ENCODE measurements at regions of chr7 and their contacts with region 1.

Region 1: GRCh38 chr7:134660961-134661376 is 14.3 kb downstream of the BPGM start:
- DNase-seq: peak; percentile 74
- H3K4me3 ChIP-seq: no peak overlapping the region
- CTCF ChIP-seq: no peak

Region 2: DNA sequence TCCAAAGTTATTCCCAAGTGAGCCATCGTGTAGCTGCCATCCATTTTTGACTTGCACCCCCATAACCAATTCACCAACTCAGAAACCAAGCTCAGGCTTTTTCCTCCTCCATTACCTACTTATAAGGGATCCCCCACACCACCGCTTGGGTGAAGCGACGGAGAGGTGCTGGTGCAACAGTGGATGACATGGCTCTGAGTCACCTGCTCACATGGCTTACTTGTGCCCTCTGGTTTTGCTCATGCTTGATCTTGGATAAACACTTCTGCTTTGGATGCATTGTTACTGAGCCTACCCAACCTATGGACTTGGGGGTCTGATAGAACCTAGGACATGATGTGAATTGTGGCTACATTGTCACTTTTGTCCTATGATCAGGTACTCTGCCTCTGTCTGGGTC is 190.1 kb before region 1 on chr7:
- CTCF ChIA-PET with region 1: no interaction called
- POLR2A ChIA-PET with region 1: no interaction called
- DNase-seq: no peak
- H3K4me3 ChIP-seq: no peak overlapping the region
- CTCF ChIP-seq: no peak

Region 3: GRCh38 chr7:134646425-134647305 is 14.3 kb before region 1 on chr7 and contains the start of gene BPGM:
- CTCF ChIA-PET with region 1: interaction called, 6 read pairs
- POLR2A ChIA-PET with region 1: interaction called, 11 read pairs
- DNase-seq: peak; percentile 100
- H3K4me3 ChIP-seq: peak within 1 kb of the TSS; percentile 83
- CTCF ChIP-seq: peak; percentile 54

Measured in AG04449 (cell line).